OCI-LY7 (cell line): ENCODE measurements at regions of chr9 and their contacts with region 1.

Region 1: DNA sequence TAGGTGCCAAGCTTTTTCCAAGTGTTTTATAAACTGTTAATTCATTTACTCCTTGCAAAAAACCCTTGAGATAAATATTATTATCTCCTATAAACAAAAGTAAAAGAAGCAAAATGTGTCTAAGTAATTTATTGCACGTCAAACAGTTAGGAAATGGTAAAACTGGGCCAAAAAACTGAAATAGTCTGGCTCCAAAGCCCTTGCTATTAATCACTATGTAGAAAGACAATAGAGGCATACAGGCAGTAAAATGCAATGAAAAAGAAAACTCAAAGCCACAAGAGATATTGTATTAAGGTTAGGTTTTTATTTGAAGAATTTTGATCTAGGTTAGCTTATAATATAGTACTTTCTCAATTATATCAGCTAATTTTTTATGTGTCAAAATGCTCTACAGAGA is 457.7 kb downstream of the ANXA1 start:
- DNase-seq: no peak
- H3K4me3 ChIP-seq: no peak overlapping the region
- H3K27ac ChIP-seq: no peak overlapping the region
- H3K4me1 ChIP-seq: no peaks in the 10 kb centered on the region
- CTCF ChIP-seq: no peak

Region 2: GRCh38 chr9:73683862-73684591 is 74.6 kb after region 1 on chr9:
- CTCF ChIA-PET with region 1: no interaction called
- POLR2A ChIA-PET with region 1: no interaction called
- intact Hi-C with region 1: loop called (anchors 10 kb)
- DNase-seq: peak; percentile 35
- H3K4me3 ChIP-seq: no peak overlapping the region
- H3K27ac ChIP-seq: no peak overlapping the region
- H3K4me1 ChIP-seq: no peaks in the 10 kb centered on the region
- CTCF ChIP-seq: peak; percentile 83